ENCODE measurements at regions of chr3 and their contacts with region 1.

Region 1: GRCh38 chr3:107846279-107846852 is 244.5 kb downstream of the CD47 start:
- DNase-seq: peak; percentile 69
- H3K4me3 ChIP-seq: no peak overlapping the region
- H3K27ac ChIP-seq: no peak overlapping the region
- H3K4me1 ChIP-seq: no peaks in the 10 kb centered on the region
- H3K27me3 ChIP-seq: peaks cover 23% of the 10 kb centered on the region
- CTCF ChIP-seq: peak; percentile 80

Region 2: GRCh38 chr3:107297597-107297996 is 548.8 kb before region 1 on chr3:
- CTCF ChIA-PET with region 1: no interaction called
- POLR2A ChIA-PET with region 1: no interaction called
- intact Hi-C with region 1: no loop called
- DNase-seq: no peak
- H3K4me3 ChIP-seq: no peak overlapping the region
- H3K27ac ChIP-seq: no peak overlapping the region
- H3K4me1 ChIP-seq: no peaks in the 10 kb centered on the region
- H3K27me3 ChIP-seq: no peaks in the 10 kb centered on the region
- CTCF ChIP-seq: no peak

Region 3: GRCh38 chr3:107574650-107575049 is 271.7 kb before region 1 on chr3:
- CTCF ChIA-PET with region 1: no interaction called
- POLR2A ChIA-PET with region 1: no interaction called
- intact Hi-C with region 1: loop called (anchors 10 kb)
- DNase-seq: peak; percentile 25
- H3K4me3 ChIP-seq: no peak overlapping the region
- H3K27ac ChIP-seq: no peak overlapping the region
- H3K4me1 ChIP-seq: no peaks in the 10 kb centered on the region
- H3K27me3 ChIP-seq: no peaks in the 10 kb centered on the region
- CTCF ChIP-seq: peak; percentile 63

Region 4: GRCh38 chr3:107660306-107660976 is 185.9 kb before region 1 on chr3:
- CTCF ChIA-PET with region 1: no interaction called
- POLR2A ChIA-PET with region 1: no interaction called
- intact Hi-C with region 1: loop called (anchors 5 kb)
- DNase-seq: peak; percentile 60
- H3K4me3 ChIP-seq: no peak overlapping the region
- H3K27ac ChIP-seq: no peak overlapping the region
- H3K4me1 ChIP-seq: peaks cover 18% of the 10 kb centered on the region
- H3K27me3 ChIP-seq: no peaks in the 10 kb centered on the region
- CTCF ChIP-seq: peak; percentile 84

Region 5: GRCh38 chr3:107676469-107677309 is 169.7 kb before region 1 on chr3:
- CTCF ChIA-PET with region 1: interaction called, 3 read pairs
- POLR2A ChIA-PET with region 1: no interaction called
- intact Hi-C with region 1: loop called (anchors 10 kb)
- DNase-seq: peak; percentile 61
- H3K4me3 ChIP-seq: no peak overlapping the region
- H3K27ac ChIP-seq: no peak overlapping the region
- H3K4me1 ChIP-seq: no peaks in the 10 kb centered on the region
- H3K27me3 ChIP-seq: no peaks in the 10 kb centered on the region
- CTCF ChIP-seq: peak; percentile 69